Activated CD4-positive, alpha-beta T cell treated with anti-CD3 and anti-CD28 coated beads, Interleukin-2, amount 10 ng/mL, durations not matched to agents 7 days and 5 days (primary cell): ENCODE measurements at regions of chr12 and their contacts with region 1.

Region 1: GRCh38 chr12:56127888-56128669 is at the start of gene ESYT1:
- DNase-seq: peak; percentile 99
- H3K4me3 Mint-ChIP-seq: peak within 1 kb of the TSS; percentile 91
- H3K27ac Mint-ChIP-seq: peak within 1 kb of the TSS; percentile 93
- H3K4me1 Mint-ChIP-seq: peaks cover 72% of the 10 kb centered on the region
- H3K27me3 Mint-ChIP-seq: no peaks in the 10 kb centered on the region
- total RNA-seq, gene ESYT1: 367 to 399 TPM

Region 2: GRCh38 chr12:56020423-56021184 is 107.5 kb before region 1 on chr12 and contains the start of gene IKZF4:
- CTCF ChIA-PET with region 1: no interaction called
- POLR2A ChIA-PET with region 1: no interaction called
- DNase-seq: peak; percentile 25
- H3K4me3 Mint-ChIP-seq: peak within 1 kb of the TSS; percentile 89
- H3K27ac Mint-ChIP-seq: peak within 1 kb of the TSS; percentile 95
- H3K4me1 Mint-ChIP-seq: peaks cover 57% of the 10 kb centered on the region
- H3K27me3 Mint-ChIP-seq: no peaks in the 10 kb centered on the region
- total RNA-seq, gene IKZF4: 15.7 to 17.4 TPM

Region 3: DNA sequence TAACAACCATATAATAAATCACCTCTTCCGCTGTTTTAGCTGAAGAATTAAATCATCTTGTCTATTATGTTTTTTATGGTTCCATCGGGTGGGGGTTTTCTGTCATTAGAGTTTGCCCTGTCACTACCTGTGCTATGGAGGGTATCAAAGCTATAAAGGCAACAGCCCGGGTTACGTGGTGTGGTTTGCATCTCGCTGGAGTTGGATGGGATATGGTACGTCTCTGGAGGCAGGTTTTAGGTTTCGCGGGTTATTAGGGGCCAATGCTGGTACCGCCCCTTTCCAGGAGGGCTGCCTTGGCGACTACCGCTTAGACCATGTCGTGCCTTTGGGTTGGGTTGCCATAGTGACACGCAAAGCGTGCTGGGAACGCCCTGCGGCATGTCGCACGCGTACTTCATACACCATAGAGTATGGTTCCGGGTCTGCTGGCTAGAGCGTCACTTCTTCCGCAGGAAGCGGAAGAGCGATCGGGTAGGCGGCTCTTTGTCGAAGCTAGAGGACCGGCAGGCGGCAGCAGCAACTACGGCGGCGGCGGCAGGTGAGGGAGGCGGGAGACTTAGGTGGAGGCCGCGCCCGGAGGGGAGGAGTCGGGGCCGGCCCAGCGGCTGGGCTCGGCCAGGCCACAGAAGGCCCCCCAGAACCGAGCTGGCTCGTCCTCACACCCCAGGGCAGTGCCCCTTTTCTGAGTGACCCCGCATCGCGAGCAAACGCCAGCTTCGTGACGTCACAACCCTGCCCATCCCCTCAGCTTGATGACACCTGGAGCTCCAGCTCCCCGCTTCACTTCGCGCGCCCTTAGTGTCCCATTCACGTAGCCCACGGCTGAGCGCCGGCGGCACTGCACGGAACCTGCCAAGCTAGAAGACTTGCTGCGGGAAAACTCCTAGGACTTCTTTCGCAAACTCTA is 10.0 kb before region 1 on chr12 and contains the start of gene ZC3H10:
- CTCF ChIA-PET with region 1: interaction called, 48 read pairs
- POLR2A ChIA-PET with region 1: interaction called, 12 read pairs
- DNase-seq: peak; percentile 99
- H3K4me3 Mint-ChIP-seq: peak within 1 kb of the TSS; percentile 95
- H3K27ac Mint-ChIP-seq: peak within 1 kb of the TSS; percentile 97
- H3K4me1 Mint-ChIP-seq: peaks cover 37% of the 10 kb centered on the region
- H3K27me3 Mint-ChIP-seq: no peaks in the 10 kb centered on the region
- total RNA-seq, gene ZC3H10: 8.2 to 9.1 TPM

Region 4: GRCh38 chr12:56143870-56144269 is 15.8 kb after region 1 on chr12:
- CTCF ChIA-PET with region 1: interaction called, 17 read pairs
- POLR2A ChIA-PET with region 1: no interaction called
- DNase-seq: no peak
- H3K4me3 Mint-ChIP-seq: no peak overlapping the region
- H3K27ac Mint-ChIP-seq: peak overlapping the region; percentile 68
- H3K4me1 Mint-ChIP-seq: peaks cover 40% of the 10 kb centered on the region
- H3K27me3 Mint-ChIP-seq: no peaks in the 10 kb centered on the region

Region 5: GRCh38 chr12:56152318-56153033 is 24.4 kb after region 1 on chr12 and contains the start of gene MYL6B:
- CTCF ChIA-PET with region 1: interaction called, 14 read pairs
- POLR2A ChIA-PET with region 1: interaction called, 6 read pairs
- DNase-seq: peak; percentile 96
- H3K4me3 Mint-ChIP-seq: peak within 1 kb of the TSS; percentile 83
- H3K27ac Mint-ChIP-seq: peak within 1 kb of the TSS; percentile 98
- H3K4me1 Mint-ChIP-seq: peaks cover 52% of the 10 kb centered on the region
- H3K27me3 Mint-ChIP-seq: no peaks in the 10 kb centered on the region
- total RNA-seq, gene MYL6B: 56.6 to 63.4 TPM

Region 6: GRCh38 chr12:56178347-56178746 is 50.3 kb after region 1 on chr12:
- CTCF ChIA-PET with region 1: no interaction called
- POLR2A ChIA-PET with region 1: interaction called, 10 read pairs
- DNase-seq: no peak
- H3K4me3 Mint-ChIP-seq: no peak overlapping the region
- H3K27ac Mint-ChIP-seq: peak overlapping the region; percentile 19
- H3K4me1 Mint-ChIP-seq: no peaks in the 10 kb centered on the region
- H3K27me3 Mint-ChIP-seq: no peaks in the 10 kb centered on the region

Region 7: GRCh38 chr12:56630160-56630632 is 502.1 kb after region 1 on chr12 and contains the start of gene BAZ2A:
- CTCF ChIA-PET with region 1: no interaction called
- POLR2A ChIA-PET with region 1: interaction called, 12 read pairs
- DNase-seq: peak; percentile 89
- H3K4me3 Mint-ChIP-seq: peak within 1 kb of the TSS; percentile 84
- H3K27ac Mint-ChIP-seq: peak within 1 kb of the TSS; percentile 93
- H3K4me1 Mint-ChIP-seq: peaks cover 69% of the 10 kb centered on the region
- H3K27me3 Mint-ChIP-seq: no peaks in the 10 kb centered on the region
- total RNA-seq, gene BAZ2A: 98.4 to 116 TPM